Transverse colon (tissue), 4 donors: ENCODE measurements at regions of chr3 and their contacts with region 1.

Region 1: DNA sequence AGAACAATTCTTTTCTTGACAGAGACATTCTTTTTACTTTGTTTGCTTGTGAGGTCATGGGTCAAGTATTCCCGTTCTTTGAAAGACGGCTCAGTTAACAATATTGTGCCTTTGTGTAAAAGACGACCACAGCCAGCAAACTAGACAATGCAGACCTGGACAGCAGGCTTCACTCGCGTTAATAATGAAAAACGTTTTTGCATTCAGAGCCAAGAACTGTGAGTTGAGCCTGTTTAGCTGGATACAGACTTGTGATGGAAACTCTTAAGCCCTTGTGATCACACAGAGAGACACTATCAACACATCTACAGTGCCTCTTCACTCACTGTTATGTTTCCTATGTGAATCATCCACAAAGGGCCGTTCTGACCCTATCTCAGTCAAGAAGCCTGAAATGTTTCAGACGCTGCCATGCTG is 37.3 kb upstream of the CMTM7 start:
- DNase-seq: no peak
- H3K4me3 ChIP-seq: no peak overlapping the region
- H3K27ac ChIP-seq: no peak overlapping the region
- H3K4me1 ChIP-seq: no peaks in the 10 kb centered on the region
- H3K27me3 ChIP-seq: no peaks in the 10 kb centered on the region
- CTCF ChIP-seq: no peak
- EP300 ChIP-seq: no peak
- POLR2A ChIP-seq: no peak

Region 2: GRCh38 chr3:31203960-31204795 is 1150.2 kb before region 1 on chr3:
- in situ Hi-C with region 1: no loop called
- intact Hi-C with region 1: loop called (anchors 5 kb)
- DNase-seq: no peak
- H3K4me3 ChIP-seq: no peak overlapping the region
- H3K27ac ChIP-seq: peak overlapping the region in 2 of 4 donors; percentile 10 to 34
- H3K4me1 ChIP-seq: peaks cover 0 to 19% (median 5%) of the 10 kb centered on the region in 4 donors
- H3K27me3 ChIP-seq: no peaks in the 10 kb centered on the region
- CTCF ChIP-seq: no peak
- EP300 ChIP-seq: no peak
- POLR2A ChIP-seq: no peak